ENCODE measurements at regions of chr11 and their contacts with region 1.

Region 1: DNA sequence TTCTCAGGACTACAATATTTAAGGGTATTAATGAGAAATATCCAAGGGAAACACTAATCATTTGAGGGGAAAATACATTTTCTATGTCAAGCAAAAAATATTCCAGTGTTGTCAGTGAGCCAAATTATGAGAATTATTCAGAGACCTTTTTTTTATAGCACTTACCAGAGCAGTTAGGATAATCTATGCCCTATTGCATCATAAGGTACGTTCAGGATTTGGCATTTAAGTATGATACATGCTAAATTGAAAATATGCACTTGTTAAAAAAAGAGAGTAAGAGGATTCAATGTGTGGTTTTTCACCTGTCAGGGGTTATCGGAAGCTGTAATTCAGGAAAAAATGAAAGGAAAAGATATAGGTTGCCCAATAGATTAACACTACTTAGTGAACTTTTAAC is 17.2 kb upstream of the MPPED2 start:
- DNase-seq: no peak
- H3K4me3 ChIP-seq: no peak overlapping the region
- H3K27ac ChIP-seq: no peak overlapping the region
- H3K4me1 ChIP-seq: no peaks in the 10 kb centered on the region
- H3K27me3 ChIP-seq: no peaks in the 10 kb centered on the region
- CTCF ChIP-seq: no peak
- EP300 ChIP-seq: no peak
- POLR2A ChIP-seq: no peak
- RAD21 ChIP-seq: no peak

Region 2: DNA sequence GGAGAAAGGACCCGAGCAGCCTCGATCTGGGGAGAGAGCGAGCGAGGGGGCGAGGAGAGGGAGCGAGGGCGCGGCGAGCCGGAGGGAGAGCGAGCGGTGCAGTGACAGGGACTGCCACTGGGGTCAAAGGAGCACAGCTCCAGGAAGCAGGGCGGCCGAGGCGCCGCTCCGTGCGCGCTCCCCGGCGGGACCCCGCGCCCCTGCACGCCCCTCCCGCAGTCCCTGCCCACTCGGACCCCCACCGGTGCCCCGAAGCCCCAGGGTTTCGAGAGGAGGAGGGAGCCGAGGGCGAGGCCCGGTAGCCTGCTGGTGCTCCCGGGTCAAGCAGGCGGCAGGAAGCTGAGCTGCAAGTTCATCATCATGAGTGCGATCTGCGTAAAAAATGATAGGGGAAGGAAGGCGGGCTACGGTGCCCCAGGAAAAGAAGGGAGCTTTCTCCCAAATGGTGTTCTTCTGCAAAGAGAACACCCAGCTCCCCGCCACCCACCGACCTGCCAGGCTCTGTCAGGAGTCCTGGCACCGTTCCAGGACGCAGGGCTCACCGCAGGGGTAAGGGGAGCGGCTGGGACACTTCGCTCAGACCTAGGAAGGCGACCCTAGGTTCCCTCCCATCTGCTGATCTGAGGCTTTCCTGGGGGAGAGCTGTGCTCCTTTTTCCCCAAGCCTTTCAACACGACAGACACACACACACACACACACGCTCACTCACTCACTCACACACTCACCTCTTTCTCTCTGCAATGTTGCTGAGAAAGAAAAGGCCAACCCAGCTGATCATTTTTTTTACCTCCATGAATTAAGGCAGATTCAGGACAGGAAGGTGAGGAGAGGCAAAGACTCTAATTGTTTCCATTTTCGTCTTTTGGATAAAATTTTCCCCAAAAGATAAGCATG is 16.9 kb before region 1 on chr11 and contains the start of gene MPPED2:
- CTCF ChIA-PET with region 1: interaction called, 10 read pairs
- POLR2A ChIA-PET with region 1: no interaction called
- DNase-seq: peak in 1 of 2 experiments; percentile 88
- H3K4me3 ChIP-seq: peak within 1 kb of the TSS; percentile 58 to 88 (median 76)
- H3K27ac ChIP-seq: no peak within 1 kb of the TSS
- H3K4me1 ChIP-seq: peaks cover 0 to 2% (median 0%) of the 10 kb centered on the region in 4 experiments; a peak in 2 of 7 replicates
- H3K27me3 ChIP-seq: peaks cover 1 to 39% (median 26%) of the 10 kb centered on the region in 4 experiments
- CTCF ChIP-seq: peak; percentile 49 to 66 (median 49)
- EP300 ChIP-seq: no peak
- POLR2A ChIP-seq: no peak
- RAD21 ChIP-seq: peak; percentile 29 to 47; a peak in 3 of 4 replicates
- total RNA-seq, gene MPPED2: 3.5 and 6.2 TPM in 2 replicates

Region 3: DNA sequence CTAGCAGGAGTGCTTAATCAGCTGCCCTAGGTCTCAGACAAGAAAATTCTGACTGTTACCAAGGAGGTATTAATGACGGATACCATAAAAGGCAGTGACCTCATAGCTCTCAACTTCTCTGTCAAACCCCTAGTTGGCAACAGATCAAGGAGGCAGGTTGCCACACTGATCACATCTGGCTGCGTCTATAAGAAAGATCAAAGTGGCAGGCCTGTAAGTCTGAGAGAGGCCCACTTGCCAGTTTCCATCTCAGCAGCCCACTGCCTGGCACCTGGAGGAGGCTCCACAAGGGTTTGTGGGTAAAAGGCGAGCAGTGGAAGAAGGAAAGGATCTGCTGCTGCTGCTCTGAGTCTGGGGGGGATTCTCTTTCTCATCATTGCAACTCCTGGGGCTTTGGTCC is 222.4 kb after region 1 on chr11:
- CTCF ChIA-PET with region 1: no interaction called
- POLR2A ChIA-PET with region 1: no interaction called
- DNase-seq: no peak
- H3K4me3 ChIP-seq: no peak overlapping the region
- H3K27ac ChIP-seq: no peak overlapping the region
- H3K4me1 ChIP-seq: no peaks in the 10 kb centered on the region
- H3K27me3 ChIP-seq: no peaks in the 10 kb centered on the region
- CTCF ChIP-seq: no peak
- EP300 ChIP-seq: no peak
- POLR2A ChIP-seq: no peak
- RAD21 ChIP-seq: no peak

Measured in H1 (cell line).